ENCODE measurements at regions of chr19 and their contacts with region 1.

Region 1: DNA sequence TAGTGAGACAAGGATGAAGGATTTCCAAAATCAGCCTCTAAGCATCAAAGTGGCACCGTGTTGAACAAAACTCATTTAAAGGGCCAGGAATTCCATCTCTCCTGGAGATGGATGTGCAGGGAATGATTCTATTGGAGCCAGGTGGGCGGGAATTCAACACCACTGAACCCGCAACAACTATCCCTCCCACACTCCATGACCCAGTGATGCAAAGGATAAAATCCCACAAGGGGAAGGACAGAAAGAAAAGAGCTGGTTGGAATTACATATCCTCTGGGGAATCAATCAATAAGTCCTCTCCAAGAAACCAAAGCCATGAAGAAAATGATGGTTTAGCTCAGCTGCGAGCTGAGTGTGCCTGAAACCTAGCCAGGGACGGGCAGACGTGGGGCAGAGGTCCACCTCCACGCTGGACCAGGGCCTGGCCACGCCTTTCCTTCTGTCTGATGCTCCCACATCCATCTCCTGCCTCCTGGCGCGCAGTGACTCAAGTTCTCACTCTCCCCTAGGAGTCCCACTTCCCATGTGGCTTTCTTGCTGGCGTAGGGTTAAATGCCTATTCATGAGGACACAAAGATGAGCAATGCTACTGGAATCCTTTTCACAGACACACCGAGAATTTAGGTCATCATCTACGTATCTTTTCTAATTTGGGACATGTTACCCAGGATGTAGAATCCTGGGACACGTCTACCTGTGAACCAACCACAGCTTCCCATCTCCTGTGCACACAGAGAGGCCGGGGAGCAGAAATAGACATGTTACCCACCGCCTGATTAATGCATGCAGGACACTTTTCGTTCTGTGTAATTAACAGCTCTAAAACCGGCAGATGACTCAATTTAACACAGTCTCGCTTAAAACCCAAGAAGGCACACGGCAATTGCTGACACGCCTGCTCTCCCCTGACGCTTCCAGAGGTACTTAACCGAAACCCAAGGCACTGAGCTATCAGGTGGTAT is 48.6 kb downstream of the PEPD start:
- DNase-seq: peak; percentile 36
- H3K4me3 ChIP-seq: peak overlapping the region in 1 of 3 experiments; percentile 27
- H3K27ac ChIP-seq: peak overlapping the region; percentile 94
- H3K4me1 ChIP-seq: peaks cover 25% of the 10 kb centered on the region
- H3K27me3 ChIP-seq: no peaks in the 10 kb centered on the region
- CTCF ChIP-seq: no peak
- POLR2A ChIP-seq: no peak

Region 2: DNA sequence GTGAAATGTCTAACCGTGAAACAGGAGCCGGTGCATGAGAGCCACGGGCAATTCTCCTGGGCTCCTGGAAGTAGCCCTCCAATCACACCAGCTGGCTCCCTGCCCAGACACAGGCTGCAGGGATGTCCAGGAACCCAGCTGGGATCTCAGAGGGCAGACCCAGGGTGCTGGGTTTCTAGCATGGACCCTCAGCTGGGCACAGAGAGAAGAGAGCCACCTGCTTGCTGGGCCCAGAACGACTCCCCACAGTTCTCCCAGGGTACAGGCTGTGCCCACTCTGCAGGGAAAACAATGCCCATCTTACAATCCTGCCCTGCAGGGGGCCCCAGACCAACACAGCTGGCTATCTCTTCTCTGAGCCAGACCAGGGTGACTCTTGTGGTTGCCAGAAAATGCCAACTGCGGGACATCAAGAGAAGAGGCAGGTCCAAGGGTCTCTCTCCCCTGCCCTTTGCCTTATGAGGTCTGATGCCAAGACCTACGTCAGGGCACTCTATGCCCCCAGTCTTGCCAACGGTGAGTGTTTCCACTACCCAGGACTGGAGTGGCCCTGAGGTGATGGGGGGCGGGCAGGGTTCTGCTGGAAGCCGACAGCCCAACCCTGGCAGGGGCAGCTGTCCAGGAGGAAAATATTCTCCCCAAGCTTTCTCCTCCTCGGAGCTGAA is 34.8 kb before region 1 on chr19:
- CTCF ChIA-PET with region 1: no interaction called
- POLR2A ChIA-PET with region 1: no interaction called
- dilution Hi-C with region 1: no loop called
- intact Hi-C with region 1: loop called (anchors 5 kb)
- DNase-seq: no peak
- H3K4me3 ChIP-seq: no peak overlapping the region
- H3K27ac ChIP-seq: no peak overlapping the region
- H3K4me1 ChIP-seq: peaks cover 6% of the 10 kb centered on the region
- H3K27me3 ChIP-seq: no peaks in the 10 kb centered on the region
- CTCF ChIP-seq: peak; percentile 15 to 41
- POLR2A ChIP-seq: no peak

Region 3: GRCh38 chr19:33508941-33509614 is 36.1 kb after region 1 on chr19:
- CTCF ChIA-PET with region 1: interaction called, 3 read pairs
- POLR2A ChIA-PET with region 1: no interaction called
- dilution Hi-C with region 1: no loop called
- intact Hi-C with region 1: loop called (anchors 2 kb)
- DNase-seq: no peak
- H3K4me3 ChIP-seq: no peak overlapping the region
- H3K27ac ChIP-seq: no peak overlapping the region
- H3K4me1 ChIP-seq: peaks cover 10% of the 10 kb centered on the region
- H3K27me3 ChIP-seq: no peaks in the 10 kb centered on the region
- CTCF ChIP-seq: no peak
- POLR2A ChIP-seq: no peak

Region 4: DNA sequence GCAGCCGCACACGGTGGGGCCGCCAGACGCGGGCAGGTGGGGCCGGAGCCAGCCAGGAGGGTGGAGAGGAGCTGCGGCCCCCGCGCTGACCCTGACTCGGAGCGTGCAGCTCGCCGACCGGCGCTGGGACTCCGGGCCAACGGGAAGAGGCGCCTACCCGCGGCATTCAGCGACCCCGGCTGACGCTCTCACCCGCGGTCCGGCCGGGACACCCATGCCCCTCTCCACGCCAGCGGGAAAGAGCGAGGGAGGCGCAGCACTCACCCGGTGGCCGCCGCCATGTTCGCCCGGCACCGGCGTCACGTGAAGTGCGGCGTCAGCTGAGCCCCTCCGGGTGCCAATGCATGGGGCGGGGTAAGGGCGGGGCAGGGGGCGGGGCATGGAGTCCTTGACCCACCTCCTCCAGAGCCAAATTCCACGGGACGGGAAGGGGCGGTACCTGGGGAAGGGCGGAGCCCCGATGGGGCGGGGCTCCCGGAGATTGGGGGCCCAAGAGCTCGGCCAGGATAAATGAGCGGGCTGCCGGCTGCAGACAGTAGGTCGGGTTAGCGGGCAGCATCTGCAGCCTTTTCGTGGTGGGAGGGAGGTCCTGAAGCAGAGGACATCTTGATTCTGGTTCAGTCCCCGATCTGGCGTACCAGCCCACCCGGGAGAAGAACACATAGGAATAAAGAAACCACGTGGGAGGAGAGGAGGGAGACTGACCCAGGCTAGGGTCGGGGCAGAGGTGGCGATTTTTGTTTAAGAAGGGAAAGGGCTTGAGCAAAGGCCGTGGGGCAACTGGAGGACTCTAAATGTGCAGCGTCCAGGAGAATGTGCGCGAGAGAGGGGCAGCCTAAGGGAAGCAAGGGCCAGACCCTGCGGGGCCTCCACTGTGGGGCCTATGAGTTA is 48.8 kb after region 1 on chr19 and contains the start of gene PEPD:
- CTCF ChIA-PET with region 1: interaction called, 5 read pairs
- POLR2A ChIA-PET with region 1: no interaction called
- dilution Hi-C with region 1: no loop called
- intact Hi-C with region 1: loop called (anchors 1 kb)
- DNase-seq: peak; percentile 89
- H3K4me3 ChIP-seq: peak within 1 kb of the TSS; percentile 73 to 93 (median 83)
- H3K27ac ChIP-seq: peak within 1 kb of the TSS; percentile 25
- H3K4me1 ChIP-seq: peaks cover 9% of the 10 kb centered on the region
- H3K27me3 ChIP-seq: no peaks in the 10 kb centered on the region
- CTCF ChIP-seq: no peak
- POLR2A ChIP-seq: peak; percentile 84
- total RNA-seq, gene PEPD: 62.7 and 73.7 TPM in 2 replicates

Measured in endothelial cell of umbilical vein (primary cell).